Posterior vena cava (tissue), 2 donors: ENCODE measurements at regions of chr1 and their contacts with region 1.

Region 1: DNA sequence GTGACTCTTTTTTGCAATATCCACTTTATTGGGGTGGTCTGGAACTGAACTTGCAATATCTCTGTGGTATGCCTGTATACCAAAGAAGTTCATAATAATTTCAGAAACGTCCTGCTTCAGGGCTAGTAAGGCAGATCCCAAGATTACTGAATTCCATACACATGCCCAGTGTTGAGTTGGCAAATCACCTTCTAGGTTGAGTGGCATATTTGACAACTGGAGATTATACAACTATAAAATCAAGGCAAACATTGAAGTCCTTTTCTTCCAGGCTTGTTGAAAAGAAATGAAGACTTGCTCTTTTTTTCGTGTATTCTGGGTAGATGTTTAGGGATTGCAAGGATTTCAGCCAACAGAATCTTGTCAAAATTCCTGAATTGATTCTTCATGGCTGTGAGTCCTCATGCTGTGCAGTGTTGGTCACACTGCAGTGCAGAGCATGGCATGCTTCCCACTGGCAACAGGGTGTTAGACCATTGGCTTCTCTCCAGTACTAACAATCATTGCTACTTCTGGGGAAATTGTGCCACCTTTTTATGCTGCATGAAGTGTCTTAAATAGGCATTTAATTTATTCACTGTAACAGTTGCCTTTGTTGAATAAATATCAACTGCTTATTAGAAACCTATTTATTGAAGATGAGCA is 367.1 kb upstream of the ADGRL4 start:
- DNase-seq: no peak

Region 2: GRCh38 chr1:77438236-77438913 is 1935.2 kb before region 1 on chr1:
- intact Hi-C with region 1: no loop called
- DNase-seq: no peak

Region 3: DNA sequence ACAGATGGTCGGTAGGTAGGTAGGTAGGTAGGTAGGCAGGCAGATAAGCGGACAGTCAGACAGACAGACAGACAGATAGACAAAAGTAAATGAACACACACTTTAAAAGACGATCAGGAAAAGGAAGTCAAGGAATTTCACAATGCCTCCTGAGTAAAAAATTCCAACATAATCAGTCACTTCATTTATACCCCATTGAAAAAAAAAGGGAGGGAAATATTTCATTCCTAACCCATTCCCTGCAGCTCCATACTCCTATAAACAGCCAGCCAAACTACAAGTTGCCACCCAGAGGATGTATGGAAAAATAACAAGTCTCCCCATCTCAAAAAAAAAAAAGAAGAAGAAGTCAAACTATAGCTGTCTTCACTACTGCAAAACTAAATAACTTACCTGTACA is 1734.5 kb before region 1 on chr1:
- intact Hi-C with region 1: loop called in 1 of 2 experiments (anchors 10 kb)
- DNase-seq: no peak

Region 4: DNA sequence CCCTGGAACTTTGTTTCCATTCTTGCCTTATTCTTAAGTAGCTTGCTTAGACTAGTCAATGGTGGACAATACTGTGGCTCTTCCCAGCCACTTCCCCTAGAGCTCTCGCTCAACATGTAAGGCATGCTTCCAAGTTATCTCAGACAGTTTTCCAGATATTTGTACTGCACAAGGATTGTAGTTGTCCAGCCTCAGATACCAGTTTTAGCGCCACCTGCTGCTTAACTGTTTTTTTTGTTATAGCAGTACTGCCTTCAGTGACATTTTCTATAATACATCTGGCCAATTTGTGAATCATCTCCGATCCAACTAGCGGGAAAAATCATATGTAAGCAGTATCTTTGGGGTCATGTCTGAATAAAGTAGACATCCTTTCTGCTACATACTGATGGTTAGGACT is 20.4 kb before region 1 on chr1:
- intact Hi-C with region 1: no loop called
- DNase-seq: no peak